HEK293 (cell line): ENCODE measurements at regions of chr7 and their contacts with region 1.

Region 1: GRCh38 chr7:106112117-106112971 is at the start of gene SYPL1:
- H3K4me3 ChIP-seq: peak within 1 kb of the TSS; percentile 89
- H3K27ac ChIP-seq: peak within 1 kb of the TSS; percentile 91
- H3K4me1 ChIP-seq: no peaks in the 10 kb centered on the region
- CTCF ChIP-seq: peak; percentile 65; the same call in 1 of the 2 replicates

Region 2: GRCh38 chr7:105849122-105849855 is 263.1 kb before region 1 on chr7:
- CTCF ChIA-PET with region 1: no interaction called
- POLR2A ChIA-PET with region 1: no interaction called
- H3K4me3 ChIP-seq: no peak overlapping the region
- H3K27ac ChIP-seq: no peak overlapping the region
- H3K4me1 ChIP-seq: 0 out of 2 replicates have a peak, but pooled peaks cover 2% of the 10 kb centered on the region
- CTCF ChIP-seq: no peak

Region 3: GRCh38 chr7:106071356-106071998 is 40.9 kb before region 1 on chr7:
- CTCF ChIA-PET with region 1: no interaction called
- POLR2A ChIA-PET with region 1: interaction called, 12 read pairs
- H3K4me3 ChIP-seq: no peak overlapping the region
- H3K27ac ChIP-seq: peak overlapping the region; percentile 45; the same call in 1 of the 2 replicates
- H3K4me1 ChIP-seq: peaks cover 22% of the 10 kb centered on the region
- CTCF ChIP-seq: no peak

Region 4: GRCh38 chr7:106101726-106102125 is 10.6 kb before region 1 on chr7:
- CTCF ChIA-PET with region 1: no interaction called
- POLR2A ChIA-PET with region 1: interaction called, 17 read pairs
- H3K4me3 ChIP-seq: no peak overlapping the region
- H3K27ac ChIP-seq: no peak overlapping the region
- H3K4me1 ChIP-seq: peaks cover 10% of the 10 kb centered on the region
- CTCF ChIP-seq: no peak

Region 5: DNA sequence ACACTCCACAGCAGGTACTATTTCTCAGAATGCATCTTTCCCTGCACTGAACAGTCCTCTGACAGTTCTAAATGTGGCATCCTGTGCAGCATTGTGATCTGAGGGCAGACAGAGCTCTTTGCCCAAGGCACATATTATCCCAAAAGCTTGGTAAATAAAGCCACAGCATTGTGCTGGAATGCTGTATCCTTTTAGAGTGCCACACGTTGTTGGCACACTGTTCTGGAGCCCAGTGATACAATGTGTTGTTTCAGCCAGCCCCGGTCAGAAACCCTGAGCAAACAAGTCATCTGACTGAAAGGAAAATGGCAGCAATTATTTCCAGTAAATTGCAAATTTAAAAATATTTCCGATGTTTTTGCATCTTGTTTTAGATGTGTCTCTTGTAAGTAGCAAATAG is 127.1 kb after region 1 on chr7:
- CTCF ChIA-PET with region 1: no interaction called
- POLR2A ChIA-PET with region 1: no interaction called
- H3K4me3 ChIP-seq: no peak overlapping the region
- H3K27ac ChIP-seq: no peak overlapping the region
- H3K4me1 ChIP-seq: no peaks in the 10 kb centered on the region
- CTCF ChIP-seq: no peak

Region 6: DNA sequence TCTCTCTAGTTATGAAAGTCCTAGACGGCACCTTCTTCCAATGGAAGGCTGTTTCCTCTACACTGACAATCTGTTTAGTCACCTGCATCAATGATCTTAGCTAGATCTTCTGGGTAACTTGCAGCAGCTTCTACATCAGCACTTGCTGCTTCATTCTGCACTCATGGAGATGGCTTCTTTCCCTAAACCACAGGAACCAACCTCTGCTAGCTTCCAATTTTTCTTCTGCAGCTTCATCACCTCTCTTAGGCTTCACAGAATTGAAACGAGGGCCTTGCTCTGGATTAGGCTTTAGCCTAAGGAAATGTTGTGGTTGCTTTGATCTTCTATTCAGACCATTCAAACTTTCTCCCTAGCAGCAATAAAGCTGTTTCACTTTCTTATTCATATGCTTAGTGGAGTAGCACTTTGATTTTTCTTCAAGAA is 147.8 kb after region 1 on chr7:
- CTCF ChIA-PET with region 1: no interaction called
- POLR2A ChIA-PET with region 1: no interaction called
- H3K4me3 ChIP-seq: no peak overlapping the region
- H3K27ac ChIP-seq: no peak overlapping the region
- H3K4me1 ChIP-seq: no peaks in the 10 kb centered on the region
- CTCF ChIP-seq: no peak

Region 7: DNA sequence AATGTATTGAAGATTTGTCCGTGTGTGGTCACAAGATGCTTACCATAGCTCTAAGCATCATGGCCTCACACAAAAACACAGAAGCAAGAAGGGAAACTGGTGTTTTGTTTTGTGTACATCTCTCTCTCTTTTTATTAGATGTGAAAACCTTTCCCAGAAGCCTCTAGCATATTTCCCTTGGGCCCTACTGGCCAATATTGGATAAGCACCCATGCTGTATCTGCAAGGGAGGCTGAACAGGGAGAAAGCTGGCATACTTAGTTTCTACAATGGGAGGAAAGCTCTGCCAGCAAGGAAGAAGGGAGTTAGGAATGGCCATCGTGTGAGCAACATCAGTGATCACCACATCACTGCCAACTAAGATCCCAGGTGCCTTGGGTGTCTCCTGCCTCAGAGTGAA is 182.0 kb after region 1 on chr7:
- CTCF ChIA-PET with region 1: no interaction called
- POLR2A ChIA-PET with region 1: no interaction called
- H3K4me3 ChIP-seq: no peak overlapping the region
- H3K27ac ChIP-seq: no peak overlapping the region
- H3K4me1 ChIP-seq: no peaks in the 10 kb centered on the region
- CTCF ChIP-seq: no peak